ENCODE measurements at regions of chr4 and their contacts with region 1.

Region 1: DNA sequence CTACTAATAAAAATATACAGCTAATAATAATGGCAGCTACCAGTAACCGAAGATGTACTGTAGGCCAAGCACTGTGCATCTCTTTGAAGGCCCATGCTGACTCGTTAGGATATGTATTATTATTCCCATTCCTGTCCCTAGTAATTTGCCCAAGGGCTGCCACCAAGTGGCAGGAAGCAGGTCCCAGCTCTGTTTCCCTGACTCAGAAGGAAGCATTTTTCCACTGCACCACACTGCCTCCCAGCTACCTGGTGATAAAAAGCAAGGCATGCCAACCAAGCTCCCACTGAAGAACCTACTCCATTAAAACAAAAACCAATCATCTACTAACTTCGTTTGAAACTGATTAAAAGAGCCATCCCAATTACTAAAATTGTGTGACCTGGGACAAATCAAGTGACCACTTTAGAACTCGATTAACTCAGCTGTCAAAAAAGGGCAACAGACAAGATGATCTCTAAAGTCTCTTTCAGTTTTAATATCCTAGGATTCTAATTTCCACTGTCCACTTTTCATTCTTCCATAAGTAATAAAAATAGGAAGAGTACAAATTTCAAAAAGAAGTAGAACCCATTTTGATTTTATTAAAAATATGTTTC is 24.3 kb upstream of the PGM2 start:
- DNase-seq: peak in 2 of 4 donors; percentile 44 to 78
- ATAC-seq: peak; percentile 91
- H3K4me3 ChIP-seq: no peak overlapping the region
- H3K27ac ChIP-seq: no peak overlapping the region
- H3K4me1 ChIP-seq: peaks cover 0 to 5% of the 10 kb centered on the region in 2 donors
- H3K27me3 ChIP-seq: no peaks in the 10 kb centered on the region
- CTCF ChIP-seq: peak; percentile 32 to 36

Region 2: GRCh38 chr4:37603070-37603468 is 199.1 kb before region 1 on chr4:
- intact Hi-C with region 1: loop called in 1 of 2 experiments (anchors 5 kb)
- DNase-seq: peak; percentile 53 to 95 (median 79)
- ATAC-seq: peak; percentile 97
- H3K4me3 ChIP-seq: no peak overlapping the region
- H3K27ac ChIP-seq: no peak overlapping the region
- H3K4me1 ChIP-seq: peaks cover 0 to 20% of the 10 kb centered on the region in 2 donors
- H3K27me3 ChIP-seq: no peaks in the 10 kb centered on the region
- CTCF ChIP-seq: peak; percentile 93 to 94

Region 3: DNA sequence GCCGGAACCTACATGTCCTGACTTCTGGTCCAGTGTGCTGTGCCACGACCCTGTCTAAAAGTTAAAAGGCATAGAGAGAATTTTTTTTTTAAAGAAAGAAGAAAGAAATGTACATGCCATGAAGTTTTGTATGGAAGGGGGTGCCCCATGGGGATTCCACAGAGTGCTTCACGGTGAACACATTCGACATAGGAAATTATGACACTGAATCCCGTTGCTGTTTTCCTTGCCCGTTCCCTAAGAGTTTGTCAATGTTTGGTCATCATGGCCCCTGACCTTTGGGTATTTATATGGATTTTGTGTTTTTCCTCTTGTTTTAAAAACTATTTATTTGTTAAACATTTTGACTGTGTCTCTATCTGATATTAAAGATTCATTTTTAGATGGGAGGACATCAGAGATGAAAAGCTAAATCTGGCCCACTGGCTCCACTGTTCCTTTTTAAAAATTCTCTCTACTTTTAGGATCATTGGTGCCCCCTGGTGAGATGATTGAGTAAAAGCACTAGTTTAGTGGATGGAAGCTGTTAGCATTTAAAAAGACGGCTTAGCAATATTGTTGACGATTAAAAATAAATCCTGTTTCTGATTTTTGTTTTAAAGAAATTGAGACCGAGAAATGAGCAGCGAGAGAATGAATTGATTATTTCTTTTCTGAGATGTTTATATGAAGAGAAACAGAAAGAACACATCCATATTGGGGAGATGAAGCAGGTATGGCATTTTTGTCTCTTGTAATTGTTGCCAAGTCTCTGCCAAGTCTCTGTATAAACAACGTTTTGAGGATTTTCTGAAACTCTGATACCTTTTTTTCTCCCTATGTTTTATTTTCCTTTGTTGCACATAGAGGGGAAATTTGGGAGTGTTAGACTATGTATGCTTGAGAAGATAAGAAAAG is 233.1 kb after region 1 on chr4:
- intact Hi-C with region 1: loop called in 1 of 2 experiments (anchors 5 kb)
- DNase-seq: peak in 2 of 4 donors; percentile 42 to 64
- ATAC-seq: peak; percentile 83
- H3K4me3 ChIP-seq: no peak overlapping the region
- H3K27ac ChIP-seq: no peak overlapping the region
- H3K4me1 ChIP-seq: no peaks in the 10 kb centered on the region
- H3K27me3 ChIP-seq: no peaks in the 10 kb centered on the region
- CTCF ChIP-seq: peak; percentile 54 to 58